Activated T-helper 2 cell treated with anti-CD3 and anti-CD28 coated beads, Interferon-gamma antibody, Interleukin-2, Interleukin-4, amounts not matched to agents 10 μg/mL and 5 μg/mL and 100 μg/mL, durations not matched to agents 14 hours and 24 hours and 36 hours (primary cell): ENCODE measurements at regions of chrX and their contacts with region 1.

Region 1: GRCh38 chrX:46704767-46705386 is 54.0 kb downstream of the SLC9A7 start:
- DNase-seq: peak; percentile 27
- H3K4me3 Mint-ChIP-seq: peak overlapping the region; percentile 51
- H3K27ac Mint-ChIP-seq: peak overlapping the region; percentile 96
- H3K4me1 Mint-ChIP-seq: peaks cover 54% of the 10 kb centered on the region
- H3K27me3 Mint-ChIP-seq: no peaks in the 10 kb centered on the region

Region 2: DNA sequence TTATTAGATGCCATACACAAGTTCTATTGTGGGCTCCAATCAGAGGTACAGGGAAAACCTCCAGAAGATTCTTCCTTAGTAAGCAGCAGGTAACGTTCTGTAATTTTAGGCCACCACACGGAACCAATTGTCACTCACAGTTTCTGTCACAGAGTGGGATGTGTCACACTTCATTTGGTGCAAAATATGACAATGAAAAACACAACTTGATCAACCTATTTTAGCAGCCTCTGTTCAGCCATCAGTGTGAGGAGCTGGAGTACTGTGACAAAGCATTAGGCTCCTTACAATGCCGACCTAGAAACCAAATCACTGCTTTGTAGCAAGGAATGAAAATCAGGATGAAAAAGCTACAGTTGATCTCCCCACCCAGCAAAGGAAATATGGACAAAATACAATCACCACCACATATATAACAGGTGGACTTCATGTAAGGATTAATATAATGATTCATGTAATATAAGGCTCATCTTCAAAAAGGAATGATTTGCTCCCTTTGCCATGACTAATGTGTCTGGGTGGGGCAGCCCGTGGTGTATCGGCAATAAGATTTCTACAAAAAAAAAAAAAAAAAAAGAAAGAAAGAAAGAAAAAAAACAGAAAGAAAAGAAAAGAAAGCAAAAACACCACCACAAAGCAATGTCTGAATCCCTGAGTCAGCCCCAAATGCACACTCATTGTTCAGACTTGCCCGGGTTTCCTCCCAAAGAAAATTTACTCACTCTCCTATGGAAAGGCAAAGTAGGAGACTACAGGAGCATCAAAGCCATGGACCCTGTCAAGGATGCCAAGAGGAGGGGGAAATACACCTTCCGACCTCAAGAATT is 18.1 kb after region 1 on chrX:
- intact Hi-C with region 1: loop called (anchors 1 kb)
- DNase-seq: no peak
- H3K4me3 Mint-ChIP-seq: no peak overlapping the region
- H3K27ac Mint-ChIP-seq: peak overlapping the region; percentile 58
- H3K4me1 Mint-ChIP-seq: peaks cover 41% of the 10 kb centered on the region
- H3K27me3 Mint-ChIP-seq: no peaks in the 10 kb centered on the region